PC-9 (cell line): ENCODE measurements at regions of chr3 and their contacts with region 1.

Region 1: DNA sequence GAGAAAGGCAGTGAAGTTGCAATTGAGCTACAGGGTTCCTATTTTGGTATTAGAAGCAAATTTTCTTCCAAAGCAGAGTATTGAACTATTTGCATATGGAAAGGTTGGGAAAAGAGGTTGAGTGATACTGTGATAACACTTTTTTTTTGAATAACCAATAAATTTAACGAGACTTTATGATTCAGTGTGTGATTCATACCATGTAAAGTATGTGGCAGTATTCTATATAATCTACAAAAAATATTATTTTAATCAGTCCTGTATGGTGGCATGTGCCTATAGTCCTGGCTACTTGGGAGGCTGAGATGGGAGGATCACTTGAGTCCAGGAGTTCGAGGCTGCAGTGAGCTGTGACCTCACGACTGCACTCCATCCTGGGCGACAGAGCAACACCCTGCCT is 206.9 kb downstream of the BBX start:
- DNase-seq: no peak
- H3K4me3 ChIP-seq: no peak overlapping the region
- H3K27ac ChIP-seq: no peak overlapping the region
- H3K4me1 ChIP-seq: no peaks in the 10 kb centered on the region
- H3K27me3 ChIP-seq: no peaks in the 10 kb centered on the region
- CTCF ChIP-seq: no peak

Region 2: DNA sequence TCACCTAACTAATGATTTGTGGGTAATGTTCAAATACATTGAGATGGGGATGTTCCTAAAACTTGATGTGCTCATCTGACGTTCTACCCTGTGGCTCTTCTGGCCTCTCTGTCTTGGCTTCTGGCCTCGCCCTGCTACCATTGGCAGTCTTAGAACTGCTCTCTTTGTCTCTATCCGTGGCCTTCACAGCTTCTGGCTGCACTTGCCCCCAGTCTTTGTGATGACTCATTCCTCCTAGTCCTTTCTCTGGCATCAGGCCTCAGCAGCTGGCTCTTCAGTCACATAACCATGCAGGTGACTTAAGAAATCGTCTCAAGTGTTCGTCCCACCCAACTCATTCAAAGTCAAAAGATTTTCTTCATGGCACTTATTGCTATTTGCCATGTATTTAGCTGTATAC is 18.8 kb before region 1 on chr3:
- CTCF ChIA-PET with region 1: no interaction called
- POLR2A ChIA-PET with region 1: no interaction called
- intact Hi-C with region 1: no loop called
- DNase-seq: peak in 1 of 2 experiments; percentile 12
- H3K4me3 ChIP-seq: no peak overlapping the region
- H3K27ac ChIP-seq: no peak overlapping the region
- H3K4me1 ChIP-seq: no peaks in the 10 kb centered on the region
- H3K27me3 ChIP-seq: no peaks in the 10 kb centered on the region
- CTCF ChIP-seq: no peak

Region 3: GRCh38 chr3:107877936-107878335 is 148.2 kb after region 1 on chr3:
- CTCF ChIA-PET with region 1: no interaction called
- POLR2A ChIA-PET with region 1: interaction called, 20 read pairs
- intact Hi-C with region 1: no loop called
- DNase-seq: no peak
- H3K4me3 ChIP-seq: no peak overlapping the region
- H3K27ac ChIP-seq: no peak overlapping the region
- H3K4me1 ChIP-seq: no peaks in the 10 kb centered on the region
- H3K27me3 ChIP-seq: no peaks in the 10 kb centered on the region
- CTCF ChIP-seq: no peak